Activated T-helper 1 cell treated with anti-CD3 and anti-CD28 coated beads, Interleukin-12 subunit alpha, Interleukin-12 subunit beta, Interleukin-2, Interleukin-4 antibody, amounts not matched to agents 30 ng/mL and 10 ng/mL and 1 ng/mL, durations not matched to agents 14 hours and 24 hours and 36 hours (primary cell): ENCODE measurements at regions of chr6 and their contacts with region 1.

Region 1: GRCh38 chr6:138987640-138988468 is at the start of gene REPS1:
- DNase-seq: peak; percentile 88
- H3K4me3 Mint-ChIP-seq: peak within 1 kb of the TSS; percentile 89
- H3K27ac Mint-ChIP-seq: peak within 1 kb of the TSS; percentile 92
- H3K4me1 Mint-ChIP-seq: peaks cover 7% of the 10 kb centered on the region
- H3K27me3 Mint-ChIP-seq: no peaks in the 10 kb centered on the region
- total RNA-seq, gene REPS1: 69.6 and 74.6 TPM in 2 replicates

Region 2: DNA sequence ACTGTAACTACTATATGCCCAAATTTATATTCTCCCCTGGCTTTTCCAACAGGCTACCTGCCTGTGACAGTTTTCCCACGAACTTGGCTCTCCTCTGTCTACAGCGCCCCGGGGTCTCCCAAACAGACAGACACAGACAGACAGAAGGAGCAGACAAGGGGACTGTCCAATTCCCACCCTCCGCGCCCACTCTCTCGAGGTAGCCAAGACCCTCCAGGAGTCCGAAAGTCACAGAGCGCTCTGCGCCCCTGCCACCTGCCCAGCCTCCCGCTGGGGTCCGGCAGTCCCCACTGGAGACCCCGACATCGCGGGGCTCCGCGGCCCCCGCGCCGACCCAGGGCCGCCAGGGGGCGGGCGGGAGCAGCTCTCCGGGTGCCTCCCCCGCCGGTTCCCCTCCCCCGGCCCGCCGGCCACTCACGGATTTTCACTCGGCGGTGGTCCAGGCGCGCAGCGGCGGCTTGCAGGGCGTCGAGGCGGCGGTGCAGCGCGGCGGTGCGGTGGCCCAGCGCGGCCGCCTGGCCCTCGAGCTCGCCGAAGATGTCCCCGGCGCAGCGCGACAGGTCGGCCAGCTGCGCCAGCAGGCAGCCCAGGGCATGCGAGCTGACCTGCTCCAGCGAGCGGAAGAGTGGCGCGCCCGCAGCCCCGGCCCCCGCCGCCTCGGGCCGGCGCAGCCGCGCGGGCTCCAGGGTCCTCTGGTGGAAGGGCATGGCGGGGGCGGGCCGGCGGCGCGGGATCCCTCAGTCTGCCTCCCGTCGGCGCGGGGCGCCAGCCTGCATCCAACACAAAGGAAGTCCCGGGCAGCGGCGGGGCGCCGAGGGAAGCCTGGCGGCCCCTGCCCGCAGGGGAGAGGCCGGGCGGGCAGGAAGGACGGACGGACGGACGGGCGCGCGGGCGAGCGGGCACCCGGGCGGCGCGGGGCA is 295.5 kb before region 1 on chr6:
- intact Hi-C with region 1: loop called (anchors 2 kb)
- DNase-seq: peak; percentile 44
- H3K4me3 Mint-ChIP-seq: peak overlapping the region; percentile 75
- H3K27ac Mint-ChIP-seq: peak overlapping the region; percentile 11
- H3K4me1 Mint-ChIP-seq: peaks cover 11% of the 10 kb centered on the region
- H3K27me3 Mint-ChIP-seq: peaks cover 50% of the 10 kb centered on the region

Region 3: GRCh38 chr6:138891255-138891986 is 96.4 kb before region 1 on chr6:
- intact Hi-C with region 1: loop called (anchors 2 kb)
- DNase-seq: no peak
- H3K4me3 Mint-ChIP-seq: no peak overlapping the region
- H3K27ac Mint-ChIP-seq: peak overlapping the region; percentile 10
- H3K4me1 Mint-ChIP-seq: no peaks in the 10 kb centered on the region
- H3K27me3 Mint-ChIP-seq: no peaks in the 10 kb centered on the region

Region 4: DNA sequence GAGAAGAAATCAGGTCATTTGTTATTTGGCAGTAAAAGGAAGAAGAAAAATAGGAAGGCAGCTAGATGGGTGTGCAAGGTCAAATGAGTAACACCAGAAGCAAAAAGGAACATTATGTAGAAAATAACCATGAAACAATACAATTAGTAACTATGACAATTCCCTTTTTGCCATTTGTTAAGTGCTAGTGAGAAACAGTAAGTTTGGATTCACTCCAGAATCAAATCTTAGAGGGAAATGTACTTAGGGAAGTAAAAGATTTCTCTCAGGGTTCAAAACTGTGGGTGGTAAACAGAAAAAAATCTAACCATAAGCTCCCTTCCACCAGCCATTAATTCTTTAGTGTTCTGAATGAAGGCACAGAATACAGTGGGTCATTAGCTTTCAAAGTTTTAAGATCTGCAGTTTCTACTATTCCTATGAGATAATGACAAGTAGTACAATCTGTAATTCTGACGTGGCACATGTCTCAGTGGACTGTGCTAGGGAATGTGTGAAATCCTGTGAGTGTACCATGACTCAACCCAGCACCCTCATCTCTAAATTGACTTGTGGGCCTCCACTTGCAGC is 16.9 kb before region 1 on chr6:
- intact Hi-C with region 1: loop called (anchors 2 kb)
- DNase-seq: no peak
- H3K4me3 Mint-ChIP-seq: no peak overlapping the region
- H3K27ac Mint-ChIP-seq: no peak overlapping the region
- H3K4me1 Mint-ChIP-seq: peaks cover 56% of the 10 kb centered on the region
- H3K27me3 Mint-ChIP-seq: no peaks in the 10 kb centered on the region

Region 5: DNA sequence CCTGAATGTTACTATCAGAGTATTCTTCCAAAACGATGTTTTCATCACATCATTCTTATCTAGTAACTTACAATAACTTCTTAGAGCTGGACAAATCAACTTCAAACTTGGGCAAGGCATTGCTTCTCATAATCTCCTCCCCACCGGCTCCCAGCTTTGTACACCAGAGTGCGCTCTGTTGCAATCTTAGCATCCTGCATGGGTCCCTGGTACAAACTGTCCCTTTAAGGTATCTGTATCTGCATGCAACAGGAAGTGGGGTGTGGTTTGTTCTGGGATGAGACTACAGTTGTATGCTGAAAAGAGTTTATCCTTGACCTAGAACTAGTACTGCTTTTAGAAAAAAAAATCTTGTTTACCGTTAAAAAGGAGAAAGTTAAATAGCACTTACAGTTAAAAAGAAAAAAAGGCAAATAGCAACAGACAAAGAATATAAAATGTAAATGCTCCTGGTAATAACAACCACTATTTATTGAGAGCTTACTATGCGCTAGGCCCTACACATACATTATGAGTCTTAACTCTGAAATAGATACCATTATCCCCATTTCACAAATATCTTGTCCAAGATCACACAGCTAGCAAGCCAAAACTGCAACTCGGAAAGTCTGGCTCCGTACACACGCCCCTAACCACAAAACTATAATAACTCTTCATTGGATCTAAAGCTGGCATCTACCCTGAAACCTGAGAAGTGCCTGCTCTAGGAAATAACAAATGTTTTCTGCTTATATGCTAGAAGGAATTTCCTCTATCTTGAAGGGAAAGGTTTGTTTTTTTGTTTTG is 137.2 kb after region 1 on chr6:
- intact Hi-C with region 1: loop called (anchors 2 kb)
- DNase-seq: peak; percentile 77
- H3K4me3 Mint-ChIP-seq: peak overlapping the region; percentile 47
- H3K27ac Mint-ChIP-seq: peak overlapping the region; percentile 92
- H3K4me1 Mint-ChIP-seq: peaks cover 33% of the 10 kb centered on the region
- H3K27me3 Mint-ChIP-seq: no peaks in the 10 kb centered on the region

Region 6: DNA sequence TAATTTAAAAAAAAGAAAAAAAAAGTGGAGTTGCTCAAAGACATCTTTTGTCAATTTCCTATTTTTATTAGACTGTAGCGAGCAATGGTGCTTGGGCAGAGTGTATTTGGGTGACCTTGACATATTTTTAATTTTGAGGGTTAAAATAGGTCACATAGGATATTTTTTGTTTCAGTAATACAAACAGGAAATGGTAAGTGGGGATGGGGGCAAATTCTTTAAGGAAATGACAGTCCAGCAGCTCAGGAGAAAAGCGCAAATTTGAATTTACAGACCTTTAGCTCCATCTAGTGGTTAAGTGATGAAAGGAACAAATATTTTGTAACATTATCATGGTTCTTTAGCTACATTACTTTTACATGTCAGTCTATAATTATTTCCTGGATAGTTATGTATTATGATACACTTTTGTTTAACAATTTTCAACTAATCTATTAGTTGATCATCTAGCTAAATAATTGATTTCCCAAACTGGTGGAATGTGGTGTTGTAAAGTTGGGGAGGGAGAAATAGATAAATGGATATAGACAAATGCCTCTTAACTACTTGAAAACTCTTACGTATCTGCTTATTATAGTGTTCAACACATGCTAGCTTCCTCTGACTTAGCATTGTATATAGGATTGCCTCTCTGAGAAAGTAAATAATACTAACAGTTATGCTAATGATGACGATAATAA is 376.6 kb after region 1 on chr6:
- intact Hi-C with region 1: loop called (anchors 2 kb)
- DNase-seq: no peak
- H3K4me3 Mint-ChIP-seq: no peak overlapping the region
- H3K27ac Mint-ChIP-seq: no peak overlapping the region
- H3K4me1 Mint-ChIP-seq: peaks cover 47% of the 10 kb centered on the region
- H3K27me3 Mint-ChIP-seq: peaks cover 4% of the 10 kb centered on the region